ENCODE measurements at regions of chr1 and their contacts with region 1.

Region 1: DNA sequence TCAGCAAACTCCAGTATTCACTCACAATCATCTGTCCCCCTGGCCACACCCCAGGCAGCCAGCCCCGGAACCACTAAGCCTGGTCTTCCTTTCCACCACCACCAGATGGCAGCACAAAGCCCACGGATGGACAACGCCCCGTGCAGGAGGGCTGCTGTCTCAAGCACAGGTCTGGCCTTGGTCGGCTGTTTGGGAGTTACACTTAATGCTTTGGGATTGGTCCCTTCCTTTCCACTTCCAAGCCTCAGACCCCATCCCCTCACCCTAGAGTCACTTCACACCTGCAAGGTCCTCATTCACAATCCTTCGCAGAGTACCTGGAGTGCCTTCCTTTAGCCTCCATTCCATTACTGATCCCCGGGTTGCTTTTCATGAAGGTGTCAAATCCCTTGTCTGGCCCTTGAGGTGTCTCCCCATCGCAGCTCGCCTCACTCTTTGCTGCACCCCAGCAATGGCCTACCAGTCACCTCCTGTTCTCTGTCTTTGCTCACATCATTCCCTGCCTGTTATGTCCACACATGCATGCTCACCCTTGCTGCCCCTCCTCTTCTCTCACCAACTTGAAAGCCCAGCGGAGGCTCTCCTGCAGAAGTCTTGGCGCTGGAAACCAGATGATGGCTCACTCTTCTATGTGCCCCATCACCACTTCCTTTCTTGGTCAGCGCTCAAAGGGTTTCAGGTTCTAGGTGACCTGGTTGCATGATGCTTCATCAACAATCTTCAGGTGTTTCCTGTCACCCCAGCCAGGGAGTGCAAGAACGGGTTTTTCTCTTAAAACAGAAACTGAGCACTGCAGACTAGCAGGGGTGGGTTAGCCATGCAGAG is 24.9 kb upstream of the KCNA2 start:
- DNase-seq: peak; percentile 83
- ATAC-seq: peak; percentile 56 to 65

Region 2: GRCh38 chr1:110407260-110408210 is 223.5 kb before region 1 on chr1 and contains the start of gene LAMTOR5:
- intact Hi-C with region 1: no loop called
- DNase-seq: peak; percentile 94
- ATAC-seq: peak; percentile 96 to 97
- total RNA-seq, gene LAMTOR5: 191 to 197 TPM

Region 3: DNA sequence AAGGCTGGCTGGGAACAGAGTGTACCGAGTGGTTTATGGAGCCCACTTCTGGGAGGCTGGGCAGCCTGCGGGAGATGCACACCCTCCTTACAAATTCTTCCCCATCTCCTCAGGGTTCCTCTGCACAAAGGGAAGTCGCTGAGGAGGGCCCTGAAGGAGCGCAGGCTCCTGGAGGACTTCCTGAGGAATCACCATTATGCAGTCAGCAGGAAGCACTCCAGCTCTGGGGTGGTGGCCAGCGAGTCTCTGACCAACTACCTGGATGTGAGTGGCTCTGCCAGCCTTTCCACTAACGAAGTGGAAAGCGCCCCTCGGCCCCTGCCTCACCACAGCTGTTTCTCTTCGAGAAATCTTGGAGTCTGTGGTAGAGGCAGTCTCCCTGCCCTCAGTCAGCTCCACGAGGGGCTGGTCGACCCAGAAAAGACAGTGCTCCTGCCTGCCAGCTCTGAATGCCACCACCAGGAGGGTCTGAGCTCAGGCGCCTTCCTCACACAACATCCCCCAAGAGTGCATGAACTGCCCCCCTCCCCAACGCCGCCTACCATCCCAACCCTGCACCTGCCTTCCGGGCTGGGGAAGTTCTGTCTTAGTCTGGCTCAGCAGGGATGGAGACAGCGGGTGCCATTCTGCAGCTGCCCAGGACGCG is 148.3 kb before region 1 on chr1:
- intact Hi-C with region 1: no loop called
- DNase-seq: no peak
- ATAC-seq: no peak

Region 4: DNA sequence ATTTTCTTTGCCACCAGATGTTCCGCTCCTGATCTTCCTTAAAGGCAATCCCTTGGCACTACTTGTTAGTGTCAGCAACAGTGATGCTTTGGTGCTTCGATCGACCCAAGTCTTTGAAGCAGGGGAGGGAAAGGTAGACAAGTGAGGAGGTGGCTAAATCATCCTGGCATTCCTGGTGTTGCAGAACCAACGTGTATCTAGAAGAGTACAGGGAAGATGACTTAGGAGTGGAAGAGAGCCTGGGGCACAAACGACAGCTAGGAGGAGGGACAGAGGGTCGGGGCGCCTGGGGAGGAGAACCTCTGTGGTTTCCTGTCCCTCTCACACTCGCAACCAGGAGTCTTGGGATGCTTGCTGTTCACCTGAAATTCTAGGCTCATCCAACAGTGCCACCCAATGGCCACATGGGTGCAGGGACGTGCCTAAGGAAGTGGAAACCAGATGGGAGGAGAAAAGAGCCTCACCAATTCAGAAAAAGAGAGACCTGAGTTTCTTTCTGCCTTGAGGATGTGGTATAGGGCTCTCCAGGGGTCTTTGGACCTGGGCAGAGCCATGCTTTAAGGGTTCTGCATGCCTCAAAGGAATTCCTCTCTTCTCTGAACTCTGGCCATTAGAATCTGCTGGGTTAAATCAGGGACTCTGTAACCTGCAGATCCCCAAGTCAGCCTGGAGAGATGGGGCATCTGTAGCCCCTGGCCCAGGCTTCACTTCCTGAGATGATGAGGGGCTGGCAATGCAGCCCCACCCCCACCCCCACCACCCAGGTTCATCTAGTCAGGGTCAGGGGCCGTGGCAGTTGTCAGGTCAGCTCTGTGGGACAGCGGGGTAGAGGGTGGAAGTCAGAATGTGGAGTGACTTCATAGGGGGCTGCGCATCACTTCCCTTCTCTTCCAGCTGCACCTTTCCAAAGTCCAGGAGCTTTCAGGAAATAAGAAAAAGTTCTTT is 15.2 kb before region 1 on chr1:
- intact Hi-C with region 1: no loop called
- DNase-seq: peak; percentile 55
- ATAC-seq: peak; percentile 60 to 64

Region 5: DNA sequence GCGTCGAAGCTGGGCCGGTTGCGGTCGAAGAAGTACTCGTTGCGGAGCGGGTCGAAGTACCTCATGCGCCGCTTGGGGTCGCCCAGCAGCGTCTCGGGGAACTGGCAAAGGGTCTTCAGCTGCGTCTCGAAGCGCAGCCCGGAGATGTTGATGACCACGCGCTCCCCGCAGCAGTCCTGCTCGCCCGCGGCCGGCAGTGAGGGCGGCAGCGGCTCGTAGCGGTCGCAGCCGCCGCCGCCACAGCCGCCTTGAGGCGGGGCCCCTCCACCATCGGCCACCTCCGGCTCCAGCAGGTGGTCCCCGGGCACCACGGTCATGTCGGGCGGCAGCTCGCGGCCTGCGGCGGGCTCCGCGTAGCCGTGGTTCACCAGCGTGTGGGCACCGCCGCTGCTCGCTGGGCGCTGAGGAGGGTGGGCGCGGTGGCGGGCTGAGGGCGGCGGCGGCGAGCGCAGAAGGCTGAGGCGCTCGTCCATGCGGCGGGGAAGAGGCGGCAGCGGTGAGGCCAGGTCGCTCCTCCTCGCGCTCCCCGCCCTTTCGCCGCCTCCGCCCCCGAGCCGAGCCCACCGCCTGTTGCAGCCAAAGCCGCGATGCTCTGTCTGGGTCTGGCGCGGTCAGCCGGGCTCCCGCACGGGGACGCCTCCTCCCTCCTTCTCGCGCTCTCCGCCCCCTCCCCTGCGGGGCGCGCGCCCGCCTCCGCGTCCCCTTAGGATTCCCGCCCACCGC is 43.4 kb after region 1 on chr1 and contains the start of gene KCNA3:
- intact Hi-C with region 1: loop called in 1 of 2 experiments (anchors 5 kb)
- DNase-seq: peak; percentile 40
- ATAC-seq: peak; percentile 84 to 86
- total RNA-seq, gene KCNA3: 2.0 to 2.7 TPM

Region 6: GRCh38 chr1:110756506-110756905 is 125.5 kb after region 1 on chr1:
- intact Hi-C with region 1: loop called in 1 of 2 experiments (anchors 2 kb)
- DNase-seq: peak; percentile 55
- ATAC-seq: peak; percentile 88 to 97

Region 7: GRCh38 chr1:110766025-110766647 is 135.1 kb after region 1 on chr1:
- intact Hi-C with region 1: loop called (anchors 1 to 5 kb)
- DNase-seq: peak; percentile 41
- ATAC-seq: peak; percentile 54 to 57